IMR-90 (cell line): ENCODE measurements at regions of chr19 and their contacts with region 1.

Region 1: GRCh38 chr19:3047425-3048189 is 14.7 kb downstream of the TLE5 start:
- DNase-seq: peak; percentile 63
- ATAC-seq: peak; percentile 97
- H3K4me3 ChIP-seq: peak overlapping the region; percentile 17
- H3K27ac ChIP-seq: no peak overlapping the region
- H3K4me1 ChIP-seq: no peaks in the 10 kb centered on the region
- H3K27me3 ChIP-seq: no peaks in the 10 kb centered on the region
- CTCF ChIP-seq: no peak
- POLR2A ChIP-seq: no peak
- RAD21 ChIP-seq: no peak

Region 2: DNA sequence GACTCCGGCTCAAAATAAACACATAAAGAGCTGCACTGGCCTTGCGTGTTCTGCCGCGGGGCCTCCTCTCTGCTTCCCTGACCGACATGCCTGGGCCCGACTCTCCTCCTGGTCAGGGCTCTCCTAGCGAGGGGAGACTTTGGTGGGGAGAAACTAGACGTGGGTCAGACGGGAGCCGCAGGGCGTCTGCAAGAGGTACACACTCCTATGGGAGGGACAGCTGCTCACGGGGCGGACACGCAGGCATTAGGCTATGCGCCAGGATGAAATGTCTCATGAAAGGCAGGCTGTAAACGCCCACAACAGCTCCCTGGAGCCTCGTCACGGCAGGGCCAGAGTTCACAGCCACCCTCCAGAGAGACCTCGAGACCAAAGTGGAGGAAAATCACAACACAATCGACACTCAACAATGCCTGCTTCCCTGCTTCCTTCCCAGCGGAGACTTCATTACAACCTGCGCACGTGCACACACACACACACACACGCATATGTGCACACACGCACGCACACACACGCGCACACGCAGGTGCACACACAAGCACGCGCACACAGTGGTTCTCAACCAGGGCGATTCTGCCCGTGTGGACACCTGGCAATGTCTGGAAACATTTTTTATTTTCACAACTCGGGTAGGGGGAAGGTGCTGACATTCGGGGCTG is 313.5 kb before region 1 on chr19:
- CTCF ChIA-PET with region 1: no interaction called
- POLR2A ChIA-PET with region 1: no interaction called
- dilution Hi-C with region 1: no loop called
- in situ Hi-C with region 1: no loop called
- intact Hi-C with region 1: no loop called
- DNase-seq: no peak
- ATAC-seq: no peak
- H3K4me3 ChIP-seq: no peak overlapping the region
- H3K27ac ChIP-seq: no peak overlapping the region
- H3K4me1 ChIP-seq: no peaks in the 10 kb centered on the region; the same call in 1 of the 2 replicates
- H3K27me3 ChIP-seq: no peaks in the 10 kb centered on the region
- CTCF ChIP-seq: no peak
- POLR2A ChIP-seq: no peak
- RAD21 ChIP-seq: no peak

Region 3: GRCh38 chr19:3138268-3138667 is 90.7 kb after region 1 on chr19:
- CTCF ChIA-PET with region 1: no interaction called
- POLR2A ChIA-PET with region 1: interaction called, 10 read pairs
- dilution Hi-C with region 1: no loop called
- in situ Hi-C with region 1: no loop called
- intact Hi-C with region 1: no loop called
- DNase-seq: no peak
- ATAC-seq: no peak
- H3K4me3 ChIP-seq: no peak overlapping the region
- H3K27ac ChIP-seq: no peak overlapping the region
- H3K4me1 ChIP-seq: peaks cover 7% of the 10 kb centered on the region
- H3K27me3 ChIP-seq: no peaks in the 10 kb centered on the region
- CTCF ChIP-seq: no peak
- POLR2A ChIP-seq: no peak
- RAD21 ChIP-seq: no peak

Region 4: DNA sequence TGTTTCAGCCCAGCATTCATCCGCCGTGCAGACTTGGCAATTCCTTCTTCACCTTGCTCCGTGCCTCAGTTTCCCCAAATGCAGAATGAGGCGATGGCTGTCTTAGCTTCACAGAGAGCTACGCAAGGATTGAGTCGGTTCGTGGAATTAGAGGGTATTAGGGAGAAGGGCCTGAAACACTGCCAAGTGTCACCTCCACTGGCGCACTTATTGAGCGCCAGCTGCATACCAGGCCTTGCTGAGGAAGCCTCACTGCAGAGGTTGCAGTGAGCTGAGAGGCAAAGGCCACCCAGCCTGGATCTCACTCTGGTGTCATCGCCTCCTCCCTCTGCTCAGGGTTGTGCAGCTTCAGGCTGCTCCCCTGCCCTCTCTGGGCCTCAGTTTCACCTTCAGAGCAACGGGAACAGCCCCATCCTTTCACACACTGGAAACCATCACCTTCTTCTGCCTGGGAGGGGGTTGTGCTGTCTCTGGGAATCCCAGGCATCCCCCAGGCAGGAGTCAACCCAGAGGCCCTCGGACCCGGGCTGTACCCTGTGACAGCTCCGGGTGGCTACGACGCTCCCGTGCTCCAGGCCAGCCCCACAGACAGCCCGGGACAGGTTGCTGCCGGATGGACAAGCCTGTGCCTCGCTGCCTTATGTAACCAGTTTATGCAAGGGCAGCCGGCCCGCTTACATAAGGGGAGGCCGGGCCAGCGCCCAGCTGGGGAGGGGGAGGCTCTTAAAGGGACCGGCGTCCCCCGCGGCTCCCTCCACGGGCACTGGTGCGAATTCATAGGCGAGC is 350.7 kb after region 1 on chr19:
- CTCF ChIA-PET with region 1: no interaction called
- POLR2A ChIA-PET with region 1: no interaction called
- dilution Hi-C with region 1: no loop called
- in situ Hi-C with region 1: no loop called
- intact Hi-C with region 1: no loop called
- DNase-seq: peak; percentile 41
- ATAC-seq: peak; percentile 26; the same call in 1 of the 2 replicates
- H3K4me3 ChIP-seq: no peak overlapping the region
- H3K27ac ChIP-seq: 0 out of 2 replicates have a peak overlapping the region, but pooled peaks have one; percentile 10
- H3K4me1 ChIP-seq: peaks cover 20% of the 10 kb centered on the region
- H3K27me3 ChIP-seq: no peaks in the 10 kb centered on the region
- CTCF ChIP-seq: no peak
- POLR2A ChIP-seq: no peak
- RAD21 ChIP-seq: no peak